ENCODE measurements at regions of chr3 and their contacts with region 1.

Region 1: DNA sequence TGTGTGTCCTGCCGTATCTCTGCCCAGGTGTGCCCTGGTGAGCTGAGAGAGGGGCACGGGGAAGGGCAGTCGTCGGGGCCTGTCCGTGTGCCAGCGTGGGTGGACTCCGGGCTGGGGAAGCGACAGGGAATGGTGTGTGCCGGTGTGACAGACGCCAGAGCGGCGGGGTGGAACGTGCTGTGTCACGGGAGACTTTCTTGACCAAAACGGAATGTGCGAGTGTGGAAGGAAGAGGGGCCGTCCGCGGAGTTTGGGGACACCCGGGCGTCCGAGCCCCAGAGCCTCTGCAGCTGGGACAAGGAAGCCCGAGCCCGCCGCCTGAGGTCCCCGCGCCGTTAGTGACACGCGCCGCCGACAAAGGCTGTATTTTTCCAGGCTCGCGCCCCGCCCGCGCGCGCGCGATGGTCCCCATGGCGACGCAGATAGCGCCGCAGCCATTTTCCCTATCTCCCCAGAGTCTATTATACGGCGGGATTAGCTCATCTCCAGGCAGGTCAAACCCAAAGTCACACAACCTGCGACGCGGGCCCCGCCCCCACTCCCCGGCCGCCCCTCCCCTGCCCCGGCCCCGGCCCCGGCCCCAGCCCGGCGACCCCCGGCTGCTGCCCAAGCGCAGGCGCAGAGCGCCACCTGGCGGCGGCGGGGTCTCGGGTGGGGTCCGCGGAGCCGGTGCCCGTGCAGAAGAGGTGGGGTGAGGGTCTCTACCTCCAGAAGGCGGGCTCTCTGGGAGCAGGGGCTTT is 4.6 kb upstream of the GATA2 start:
- DNase-seq: peak; percentile 82
- ATAC-seq: peak; percentile 60

Region 2: DNA sequence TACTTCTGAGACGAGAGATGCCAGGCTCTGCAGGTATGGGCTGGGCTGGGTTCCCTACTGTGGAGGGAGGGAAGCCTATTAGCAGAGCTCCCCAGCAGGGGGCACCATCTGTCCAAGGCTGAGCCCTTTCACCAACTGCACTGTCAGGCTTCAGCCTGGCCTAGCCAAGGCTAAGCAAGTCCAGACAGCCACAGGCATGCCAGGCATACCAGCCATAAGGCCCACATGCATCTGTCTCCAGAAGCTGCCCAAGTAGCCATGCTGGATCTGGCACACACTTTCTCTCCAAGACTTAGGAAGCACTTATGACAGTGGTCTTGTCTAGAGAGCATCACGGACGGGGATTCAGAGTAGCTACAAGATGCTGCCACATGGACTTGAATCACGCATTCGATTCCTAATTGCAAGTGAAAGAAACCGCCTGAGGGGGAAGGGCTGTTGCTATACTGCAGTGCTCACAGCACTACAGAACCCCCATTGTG is 402.3 kb before region 1 on chr3:
- intact Hi-C with region 1: loop called (anchors 5 kb)
- DNase-seq: peak; percentile 85
- ATAC-seq: peak; percentile 95

Region 3: DNA sequence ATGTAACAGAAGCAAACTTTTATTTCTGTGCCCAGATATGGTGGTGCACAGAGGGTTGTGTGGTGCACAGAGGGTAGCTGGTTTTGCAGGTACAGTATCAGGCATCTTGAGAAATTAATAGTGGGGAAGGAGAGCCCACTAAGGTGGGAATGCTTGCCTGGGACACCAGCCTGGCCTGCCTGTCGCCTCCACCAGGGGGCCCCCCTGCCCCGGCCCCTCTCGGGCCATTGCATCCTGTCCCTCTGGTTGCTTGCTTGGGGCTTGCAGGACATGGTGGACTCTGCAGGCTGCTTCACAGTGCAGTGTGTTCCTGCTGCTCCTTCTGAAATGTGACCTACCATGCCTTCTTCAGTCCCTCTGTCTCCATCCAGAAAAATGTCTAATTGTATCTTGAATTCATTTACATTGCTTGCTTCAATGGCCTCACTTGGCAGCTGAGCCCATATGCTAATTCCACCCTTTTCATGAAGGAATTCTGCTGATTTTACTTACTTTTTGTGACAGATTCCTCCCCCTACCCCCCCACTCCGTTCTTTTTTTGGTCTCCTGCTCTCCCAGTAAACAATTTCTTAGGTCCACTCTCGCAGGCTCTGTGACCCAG is 270.7 kb before region 1 on chr3:
- intact Hi-C with region 1: loop called (anchors 5 kb)
- DNase-seq: no peak
- ATAC-seq: peak; percentile 56

Region 4: DNA sequence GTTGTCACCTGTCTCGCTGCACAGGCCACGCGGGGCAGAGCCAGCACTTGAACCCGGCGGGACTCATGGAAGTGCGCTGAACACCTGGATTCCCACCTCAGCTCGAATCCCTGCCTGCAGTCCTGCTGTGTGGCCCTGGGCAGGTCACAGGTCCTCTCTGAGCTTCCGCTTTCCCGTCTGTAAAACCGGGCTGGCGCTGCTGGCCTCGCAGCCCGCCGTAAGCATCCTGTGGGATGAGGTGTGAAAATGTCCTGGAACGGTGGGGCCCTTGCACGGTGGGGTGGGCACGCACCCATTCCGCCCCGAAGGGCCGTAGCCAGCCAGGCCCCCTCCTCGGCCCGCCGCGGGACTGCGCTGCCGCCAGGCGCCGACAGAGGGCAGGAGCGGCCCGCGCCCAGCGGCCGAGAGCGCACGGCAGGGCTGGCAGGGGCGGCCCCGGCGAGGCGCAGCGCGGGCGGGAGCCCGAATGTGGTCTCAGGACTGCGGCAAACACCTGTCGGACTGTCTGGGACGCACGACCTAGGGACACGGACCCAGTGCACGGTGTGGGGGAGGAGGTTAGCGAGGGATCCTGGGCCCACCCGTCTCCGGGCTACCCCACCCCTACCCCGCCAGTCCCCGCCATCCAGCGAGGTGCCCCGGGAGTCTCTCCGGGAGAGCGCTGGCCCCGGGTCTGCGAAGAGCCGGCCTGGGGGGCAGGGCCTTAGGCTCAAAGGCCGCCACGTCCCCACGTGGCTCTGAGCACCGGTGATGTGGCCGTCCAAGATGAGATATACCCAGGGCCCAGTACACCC is 71.2 kb before region 1 on chr3:
- intact Hi-C with region 1: loop called (anchors 5 kb)
- DNase-seq: peak; percentile 79
- ATAC-seq: peak; percentile 86

Region 5: GRCh38 chr3:128584412-128585020 is 87.0 kb after region 1 on chr3:
- intact Hi-C with region 1: loop called (anchors 5 kb)
- DNase-seq: peak; percentile 88
- ATAC-seq: peak; percentile 94